ENCODE measurements at regions of chr3 and their contacts with region 1.

Region 1: GRCh38 chr3:129627429-129628168 is 21.1 kb upstream of the PLXND1 start:
- DNase-seq: peak; percentile 65 to 84
- ATAC-seq: peak; percentile 50 to 70 (median 61)
- H3K4me3 ChIP-seq: peak overlapping the region; percentile 76
- H3K27ac ChIP-seq: peak overlapping the region; percentile 91
- H3K4me1 ChIP-seq: peaks cover 23% of the 10 kb centered on the region
- H3K27me3 ChIP-seq: no peaks in the 10 kb centered on the region
- CTCF ChIP-seq: peak; percentile 87

Region 2: DNA sequence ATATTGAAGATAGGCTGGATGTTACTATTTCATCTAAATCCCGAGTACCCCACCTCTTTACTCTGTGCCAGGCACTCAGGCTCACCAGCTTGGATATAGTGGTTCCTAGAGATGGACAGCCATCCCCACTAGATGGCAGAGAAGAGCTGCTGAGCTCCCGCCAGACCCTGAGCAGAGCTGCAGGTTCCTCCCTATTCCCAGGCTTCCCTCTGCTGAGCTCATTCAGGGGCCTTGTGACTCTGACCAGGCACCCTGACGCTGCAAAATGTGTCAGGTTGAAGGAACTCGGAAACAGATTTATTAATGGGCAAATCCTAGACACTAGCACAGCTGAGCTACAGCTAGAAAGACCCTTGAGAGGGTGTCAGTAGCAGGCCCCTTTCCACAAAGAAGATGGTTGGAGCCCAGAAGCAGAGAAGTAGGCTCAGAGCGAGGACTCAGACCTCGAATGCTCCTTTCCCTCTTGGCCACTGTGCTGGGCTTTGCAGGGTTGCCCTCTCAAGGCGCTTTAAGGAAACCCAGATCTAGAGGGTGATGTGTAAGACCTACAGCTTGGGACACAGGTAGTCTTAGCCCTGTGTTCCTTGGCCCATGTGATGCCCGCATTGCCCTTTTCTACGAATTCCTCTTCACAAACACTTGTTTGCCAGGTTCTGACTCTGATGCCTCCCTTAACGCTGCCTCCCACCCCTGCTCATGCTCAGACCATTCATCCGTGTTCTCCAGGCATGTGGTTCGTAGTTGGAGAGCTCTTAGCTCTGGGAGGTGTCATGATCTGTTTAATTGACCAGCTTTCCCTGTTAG is 137.2 kb before region 1 on chr3:
- intact Hi-C with region 1: loop called in 1 of 2 experiments (anchors 1 kb)
- DNase-seq: peak; percentile 81 to 88
- ATAC-seq: peak; percentile 87
- H3K4me3 ChIP-seq: no peak overlapping the region
- H3K27ac ChIP-seq: peak overlapping the region; percentile 72
- H3K4me1 ChIP-seq: peaks cover 37% of the 10 kb centered on the region
- H3K27me3 ChIP-seq: no peaks in the 10 kb centered on the region
- CTCF ChIP-seq: peak; percentile 88

Region 3: GRCh38 chr3:129994883-129995559 is 367.4 kb after region 1 on chr3:
- intact Hi-C with region 1: loop called in 1 of 2 experiments (anchors 5 kb)
- DNase-seq: no peak
- ATAC-seq: no peak
- H3K4me3 ChIP-seq: no peak overlapping the region
- H3K27ac ChIP-seq: no peak overlapping the region
- H3K4me1 ChIP-seq: no peaks in the 10 kb centered on the region
- H3K27me3 ChIP-seq: no peaks in the 10 kb centered on the region
- CTCF ChIP-seq: no peak